Sciatic nerve (tissue), 2 donors: ENCODE measurements at regions of chr1 and their contacts with region 1.

Region 1: DNA sequence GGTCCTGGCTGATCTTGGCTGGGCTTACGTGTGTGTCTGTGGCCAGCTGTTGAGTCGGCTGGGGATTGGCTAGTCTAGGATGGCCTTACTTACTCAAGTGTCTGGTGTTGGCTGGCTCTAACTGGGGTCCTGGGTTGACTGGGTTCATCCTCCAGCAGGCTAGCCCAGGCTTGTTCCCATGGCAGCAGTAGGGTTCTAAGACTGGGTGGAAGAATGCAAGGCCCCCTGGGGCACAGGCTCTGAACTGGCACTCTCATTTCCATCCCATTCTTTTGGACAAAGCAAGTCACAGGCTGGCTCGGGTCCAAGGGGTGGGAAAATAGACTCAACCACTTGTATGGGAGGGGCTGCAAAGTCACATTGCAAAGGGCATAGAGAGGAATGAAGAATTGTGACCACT is 7.9 kb upstream of the OPRD1 start:
- DNase-seq: no peak
- ATAC-seq: no peak

Region 2: DNA sequence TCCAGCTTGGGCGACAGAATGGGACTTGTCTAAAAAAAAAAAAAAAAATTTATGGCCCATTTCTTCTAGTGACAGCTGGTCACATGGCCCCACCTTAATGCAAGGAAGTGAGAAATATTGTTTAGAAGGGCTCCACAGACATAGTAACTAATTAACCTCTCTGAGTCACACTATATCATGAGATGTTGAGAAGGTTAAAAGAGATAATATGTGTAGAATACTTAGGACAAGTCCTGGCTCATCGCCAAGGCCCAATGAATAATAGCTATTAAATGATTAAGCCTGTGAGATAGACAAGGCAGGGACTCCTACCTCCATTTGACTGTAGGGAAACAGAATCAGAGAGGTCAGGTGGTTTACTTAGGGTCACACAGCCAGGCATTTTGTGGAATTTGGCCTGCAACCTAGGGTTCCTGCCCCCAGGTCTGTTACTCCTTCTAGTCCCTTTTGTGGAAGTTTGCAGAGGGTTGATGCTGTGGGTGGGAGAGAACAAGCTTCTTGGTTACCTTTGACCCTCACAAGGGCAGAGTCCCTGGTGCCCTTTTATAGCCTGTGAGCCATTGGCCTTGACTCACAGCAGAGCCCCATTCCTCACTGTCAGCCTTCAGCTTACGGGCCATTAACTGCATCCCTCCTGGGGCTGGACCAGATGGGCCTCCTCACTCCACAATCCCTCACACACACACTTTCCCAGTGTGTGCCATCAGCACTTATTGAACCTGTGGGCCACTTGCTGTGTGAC is 56.4 kb after region 1 on chr1:
- intact Hi-C with region 1: loop called (anchors 10 kb)
- DNase-seq: no peak
- ATAC-seq: no peak